Endothelial cell of umbilical vein (primary cell): ENCODE measurements at regions of chr4 and their contacts with region 1.

Region 1: GRCh38 chr4:146175541-146176453 is at the start of gene LSM6:
- DNase-seq: peak; percentile 86
- H3K4me3 ChIP-seq: peak within 1 kb of the TSS; percentile 63 to 80 (median 72)
- H3K27ac ChIP-seq: peak within 1 kb of the TSS; percentile 65
- H3K4me1 ChIP-seq: peaks cover 10% of the 10 kb centered on the region
- H3K27me3 ChIP-seq: no peaks in the 10 kb centered on the region
- CTCF ChIP-seq: peak in 1 of 2 donors; percentile 1
- POLR2A ChIP-seq: peak; percentile 53
- total RNA-seq, gene LSM6: 34.7 and 43.1 TPM in 2 replicates

Region 2: GRCh38 chr4:146023334-146023967 is 152.3 kb before region 1 on chr4:
- CTCF ChIA-PET with region 1: no interaction called
- POLR2A ChIA-PET with region 1: no interaction called
- dilution Hi-C with region 1: no loop called
- intact Hi-C with region 1: no loop called
- DNase-seq: no peak
- H3K4me3 ChIP-seq: no peak overlapping the region
- H3K27ac ChIP-seq: no peak overlapping the region
- H3K4me1 ChIP-seq: no peaks in the 10 kb centered on the region
- H3K27me3 ChIP-seq: peaks cover 0 to 11% of the 10 kb centered on the region in 2 experiments
- CTCF ChIP-seq: no peak
- POLR2A ChIP-seq: no peak

Region 3: DNA sequence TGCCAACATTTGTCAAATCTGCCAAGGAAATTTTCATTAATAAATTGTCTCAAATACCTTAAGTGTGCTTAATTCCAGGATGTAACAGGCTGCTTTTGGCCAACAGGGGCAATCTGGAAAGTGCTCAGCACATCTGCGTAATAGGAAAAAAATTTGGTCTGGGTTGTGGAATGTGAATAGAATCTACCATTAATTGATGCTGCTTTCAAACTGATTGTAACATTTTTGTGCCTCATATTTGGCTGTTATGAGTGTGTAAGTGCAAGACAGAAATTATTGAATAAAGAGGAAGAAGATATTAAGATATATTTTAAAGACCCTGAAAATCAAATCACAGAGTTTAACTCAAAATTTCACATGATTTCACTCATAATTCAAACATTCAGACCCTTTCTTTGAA is 79.7 kb after region 1 on chr4:
- CTCF ChIA-PET with region 1: no interaction called
- POLR2A ChIA-PET with region 1: no interaction called
- dilution Hi-C with region 1: no loop called
- intact Hi-C with region 1: no loop called
- DNase-seq: no peak
- H3K4me3 ChIP-seq: no peak overlapping the region
- H3K27ac ChIP-seq: no peak overlapping the region
- H3K4me1 ChIP-seq: peaks cover 2% of the 10 kb centered on the region
- H3K27me3 ChIP-seq: no peaks in the 10 kb centered on the region
- CTCF ChIP-seq: no peak
- POLR2A ChIP-seq: no peak

Region 4: GRCh38 chr4:146333187-146333894 is 157.5 kb after region 1 on chr4:
- CTCF ChIA-PET with region 1: interaction called, 3 read pairs
- POLR2A ChIA-PET with region 1: no interaction called
- dilution Hi-C with region 1: no loop called
- intact Hi-C with region 1: loop called (anchors 5 kb)
- DNase-seq: no peak
- H3K4me3 ChIP-seq: no peak overlapping the region
- H3K27ac ChIP-seq: no peak overlapping the region
- H3K4me1 ChIP-seq: peaks cover 49% of the 10 kb centered on the region
- H3K27me3 ChIP-seq: no peaks in the 10 kb centered on the region
- CTCF ChIP-seq: no peak
- POLR2A ChIP-seq: no peak